AG04449 (cell line): ENCODE measurements at regions of chr1 and their contacts with region 1.

Region 1: GRCh38 chr1:156797212-156797871 is 19.3 kb downstream of the SH2D2A start:
- DNase-seq: no peak
- H3K4me3 ChIP-seq: no peak overlapping the region
- CTCF ChIP-seq: peak; percentile 73

Region 2: DNA sequence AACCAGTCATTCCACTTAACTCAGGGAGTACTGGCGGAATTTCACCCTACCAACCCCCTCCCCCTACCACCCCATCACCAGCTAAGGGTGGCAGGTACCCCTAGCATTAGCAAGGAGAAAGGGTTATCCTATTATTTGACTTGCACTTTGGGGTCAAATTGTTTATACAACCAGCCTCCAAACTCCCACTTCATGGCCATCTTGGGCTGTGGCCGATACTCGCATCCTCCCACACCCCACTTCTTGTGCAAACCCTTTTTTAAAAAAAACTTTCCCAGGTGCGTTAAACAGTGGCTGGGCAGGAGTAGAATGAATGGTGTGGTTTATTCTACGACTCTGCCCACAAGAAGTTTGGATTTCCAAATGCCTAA is 55.7 kb before region 1 on chr1:
- CTCF ChIA-PET with region 1: no interaction called
- POLR2A ChIA-PET with region 1: no interaction called
- DNase-seq: no peak
- H3K4me3 ChIP-seq: no peak overlapping the region
- CTCF ChIP-seq: no peak

Region 3: DNA sequence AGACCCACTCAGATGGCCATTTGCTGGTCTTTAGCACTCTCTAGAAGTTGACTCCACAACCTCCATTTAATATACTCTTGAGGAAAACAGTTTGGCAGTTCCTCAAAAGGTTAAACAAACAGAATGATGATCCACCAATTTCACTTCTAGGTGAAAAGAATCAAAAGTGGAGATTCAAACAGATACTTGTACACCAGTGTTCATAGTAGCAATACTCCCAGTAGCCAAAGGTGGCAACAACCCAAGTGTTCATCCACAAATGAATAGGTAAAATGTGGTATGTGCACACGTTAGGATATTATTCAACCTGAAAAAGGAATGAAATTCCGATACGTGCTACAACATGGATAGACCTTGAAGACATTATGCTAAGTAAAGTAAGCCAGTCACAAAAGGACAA is 23.7 kb before region 1 on chr1:
- CTCF ChIA-PET with region 1: interaction called, 60 read pairs
- POLR2A ChIA-PET with region 1: interaction called, 3 read pairs
- DNase-seq: no peak
- H3K4me3 ChIP-seq: no peak overlapping the region
- CTCF ChIP-seq: no peak

Region 4: DNA sequence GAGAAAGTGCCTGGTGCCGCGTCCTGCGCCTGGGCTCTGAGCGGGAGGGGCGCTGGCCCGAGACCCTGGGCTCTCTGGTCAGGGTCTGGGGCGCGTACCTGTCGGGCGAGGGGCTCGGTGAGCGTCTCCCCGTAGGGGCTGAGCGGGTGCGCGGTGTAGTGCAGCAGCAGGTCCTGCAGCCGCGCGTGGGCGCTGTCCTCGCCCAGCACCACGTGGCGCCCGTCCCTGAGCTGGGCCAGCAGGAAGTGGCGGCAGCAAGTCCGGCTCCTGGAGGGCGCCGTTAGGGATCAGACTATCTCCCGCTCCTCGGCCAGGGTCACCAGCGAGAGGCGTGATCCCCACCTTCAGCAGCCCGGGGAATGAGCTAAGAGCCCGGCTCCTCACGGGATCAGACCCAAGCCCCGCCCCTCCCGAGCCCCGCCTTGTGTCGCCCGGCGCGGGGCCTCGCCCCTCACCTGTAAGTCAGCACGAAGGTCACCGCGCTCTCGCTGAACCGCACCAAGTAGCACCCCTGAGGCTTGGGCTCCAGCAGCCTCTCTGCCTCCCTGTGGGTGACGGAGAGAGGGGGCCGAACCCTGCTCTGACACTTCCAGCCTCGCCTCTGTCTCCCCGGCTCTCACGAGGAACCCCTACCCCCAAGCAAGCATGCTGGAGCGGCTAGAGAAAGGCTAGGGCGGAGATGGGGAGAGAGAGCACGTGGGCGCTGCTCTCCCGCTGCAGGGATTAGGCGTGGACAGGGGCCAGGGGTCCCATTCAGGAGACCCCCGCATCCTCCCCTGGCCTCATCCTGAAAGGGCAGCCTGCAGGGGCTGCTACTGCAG is 16.6 kb after region 1 on chr1:
- CTCF ChIA-PET with region 1: interaction called, 129 read pairs
- POLR2A ChIA-PET with region 1: interaction called, 3 read pairs
- DNase-seq: no peak
- H3K4me3 ChIP-seq: peak overlapping the region; percentile 33
- CTCF ChIP-seq: peak; percentile 80

Region 5: DNA sequence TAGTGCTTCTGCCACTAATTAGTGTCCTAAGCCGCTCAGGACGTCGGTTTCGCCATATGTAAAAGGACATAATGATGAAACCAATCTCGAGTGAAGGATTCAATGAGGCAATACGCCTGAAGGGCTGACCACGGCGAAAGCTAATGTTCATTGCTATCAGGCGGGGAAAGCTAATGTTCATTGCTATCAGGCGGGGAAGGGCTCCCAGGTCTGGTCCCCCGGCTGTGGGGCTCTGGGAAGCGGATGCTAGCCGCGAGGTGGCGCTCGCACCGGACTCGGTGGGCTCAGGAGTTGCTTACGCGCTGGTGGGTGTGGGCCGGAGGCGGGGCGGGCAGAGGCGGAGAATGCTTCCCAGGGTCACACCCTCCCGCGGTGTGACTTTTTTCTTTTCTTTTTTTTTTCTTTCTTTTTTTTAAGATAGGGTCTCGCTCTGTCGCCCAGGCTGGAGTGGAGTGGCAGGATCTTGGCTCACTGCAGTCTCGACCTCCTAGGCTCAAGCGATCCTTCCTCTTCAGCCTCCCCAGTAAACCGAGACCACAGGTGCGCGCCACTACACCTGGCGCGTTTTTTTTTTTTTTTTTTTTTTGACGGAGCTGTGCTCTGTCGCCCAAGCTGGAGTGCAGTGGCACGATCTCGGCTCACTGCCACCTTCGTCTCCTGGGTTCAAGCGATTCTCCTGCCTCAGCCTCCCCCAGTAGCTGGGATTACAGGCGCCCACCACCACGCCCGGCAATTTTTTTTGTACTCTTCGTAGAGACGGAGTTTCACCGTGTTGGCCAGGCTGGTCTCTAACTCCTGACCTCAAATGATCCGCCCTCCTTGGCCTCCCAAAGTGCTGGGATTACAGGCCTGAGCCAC is 95.1 kb after region 1 on chr1:
- CTCF ChIA-PET with region 1: interaction called, 333 read pairs
- POLR2A ChIA-PET with region 1: no interaction called
- DNase-seq: no peak
- H3K4me3 ChIP-seq: peak overlapping the region; percentile 30
- CTCF ChIP-seq: peak; percentile 97